Activated B cell treated with CpG ODN at 0.5 μM for 24 hours (primary cell): ENCODE measurements at regions of chr12 and their contacts with region 1.

Region 1: GRCh38 chr12:25130741-25131188 is 64.2 kb downstream of the DNAI7 start:
- DNase-seq: no peak
- ATAC-seq: peak; percentile 54
- H3K4me3 Mint-ChIP-seq: no peak overlapping the region
- H3K27ac Mint-ChIP-seq: no peak overlapping the region
- H3K4me1 Mint-ChIP-seq: peaks cover 7% of the 10 kb centered on the region
- H3K27me3 Mint-ChIP-seq: no peaks in the 10 kb centered on the region
- CTCF ChIP-seq: no peak

Region 2: DNA sequence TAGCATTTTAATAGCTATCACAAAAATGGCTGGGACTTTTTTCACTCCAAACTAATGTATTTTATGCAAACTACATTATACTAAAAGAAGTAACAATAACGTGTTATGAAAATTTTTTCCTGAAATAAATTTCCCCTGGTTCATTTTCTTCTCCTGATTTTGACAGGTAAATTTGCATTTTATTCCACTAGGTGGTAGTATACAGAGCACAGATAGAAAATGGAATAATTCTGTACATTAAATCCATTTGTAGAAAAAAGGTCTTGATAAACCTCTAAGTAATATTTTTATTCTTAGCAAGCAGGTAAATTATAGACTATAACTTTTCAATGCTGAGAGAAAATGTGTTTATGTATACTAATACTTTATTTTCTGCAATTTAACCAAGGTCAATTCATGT is 278.3 kb before region 1 on chr12:
- CTCF ChIA-PET with region 1: interaction called, 5 read pairs
- POLR2A ChIA-PET with region 1: no interaction called
- intact Hi-C with region 1: loop called (anchors 1 kb)
- DNase-seq: no peak
- ATAC-seq: no peak
- H3K4me3 Mint-ChIP-seq: no peak overlapping the region
- H3K27ac Mint-ChIP-seq: no peak overlapping the region
- H3K4me1 Mint-ChIP-seq: peaks cover 14% of the 10 kb centered on the region
- H3K27me3 Mint-ChIP-seq: no peaks in the 10 kb centered on the region
- CTCF ChIP-seq: no peak

Region 3: GRCh38 chr12:24979976-24980725 is 150.6 kb before region 1 on chr12:
- CTCF ChIA-PET with region 1: interaction called, 3 read pairs
- POLR2A ChIA-PET with region 1: interaction called, 11 read pairs
- intact Hi-C with region 1: no loop called
- DNase-seq: no peak
- ATAC-seq: no peak
- H3K4me3 Mint-ChIP-seq: no peak overlapping the region
- H3K27ac Mint-ChIP-seq: no peak overlapping the region
- H3K4me1 Mint-ChIP-seq: no peaks in the 10 kb centered on the region
- H3K27me3 Mint-ChIP-seq: no peaks in the 10 kb centered on the region
- CTCF ChIP-seq: no peak

Region 4: GRCh38 chr12:25074954-25075353 is 55.8 kb before region 1 on chr12:
- CTCF ChIA-PET with region 1: no interaction called
- POLR2A ChIA-PET with region 1: no interaction called
- intact Hi-C with region 1: loop called (anchors 1 kb)
- DNase-seq: no peak
- ATAC-seq: peak; percentile 40
- H3K4me3 Mint-ChIP-seq: peak overlapping the region; percentile 22
- H3K27ac Mint-ChIP-seq: peak overlapping the region; percentile 61
- H3K4me1 Mint-ChIP-seq: peaks cover 62% of the 10 kb centered on the region
- H3K27me3 Mint-ChIP-seq: no peaks in the 10 kb centered on the region
- CTCF ChIP-seq: no peak

Region 5: DNA sequence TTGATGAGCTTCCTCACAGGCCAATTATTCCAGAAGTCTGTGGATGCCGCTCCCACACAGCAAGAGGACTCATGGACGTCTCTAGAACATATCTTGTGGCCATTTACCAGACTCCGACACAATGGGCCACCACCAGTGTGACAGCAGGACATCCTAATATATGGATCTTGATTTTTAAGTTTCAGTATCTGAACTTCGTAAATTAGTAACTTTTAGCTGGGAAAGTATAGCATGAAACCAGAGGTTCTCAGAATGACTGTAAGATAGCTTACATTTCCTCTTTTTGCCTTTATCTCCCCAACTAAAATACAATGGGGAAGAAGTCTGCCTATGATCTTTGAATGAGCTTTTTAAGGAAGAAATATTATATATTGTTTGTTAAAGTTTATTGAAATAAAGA is 22.8 kb before region 1 on chr12:
- CTCF ChIA-PET with region 1: no interaction called
- POLR2A ChIA-PET with region 1: no interaction called
- intact Hi-C with region 1: no loop called
- DNase-seq: peak; percentile 17
- ATAC-seq: peak; percentile 84
- H3K4me3 Mint-ChIP-seq: peak overlapping the region; percentile 47
- H3K27ac Mint-ChIP-seq: peak overlapping the region; percentile 88
- H3K4me1 Mint-ChIP-seq: peaks cover 20% of the 10 kb centered on the region
- H3K27me3 Mint-ChIP-seq: no peaks in the 10 kb centered on the region
- CTCF ChIP-seq: no peak